Posterior vena cava (tissue), 2 donors: ENCODE measurements at regions of chr16 and their contacts with region 1.

Region 1: GRCh38 chr16:72856797-72857196 is 191.1 kb downstream of the ZFHX3 start:
- DNase-seq: no peak

Region 2: DNA sequence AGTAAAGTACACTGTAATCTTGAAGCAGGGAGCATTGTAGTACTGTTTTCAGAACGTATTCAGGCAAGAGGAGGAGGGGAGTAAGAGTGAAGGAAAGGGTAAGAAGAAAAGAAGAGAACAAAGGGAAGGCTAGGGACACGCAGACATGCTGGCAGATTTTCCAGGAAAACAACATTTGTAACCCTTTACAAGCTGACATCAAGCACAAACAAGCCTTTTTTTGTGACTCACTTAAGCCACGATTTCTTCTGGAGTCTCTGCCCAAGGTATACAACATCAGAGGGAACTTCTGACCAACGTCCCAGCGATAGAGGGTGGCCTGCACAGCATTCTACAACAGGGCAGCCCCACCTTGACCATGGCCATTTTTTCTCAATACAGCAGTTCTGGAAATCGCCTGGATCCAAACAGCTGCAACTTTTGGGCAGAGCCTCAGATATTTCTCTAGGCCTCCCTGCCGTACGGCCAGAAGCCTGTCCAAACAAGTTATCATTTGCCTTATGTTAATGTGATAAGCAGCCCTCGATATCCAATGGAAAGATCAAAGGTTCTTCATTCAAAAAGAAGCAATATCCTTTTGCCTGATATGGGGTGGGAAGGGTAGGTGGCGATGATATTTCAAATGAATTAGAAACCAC is 56.2 kb before region 1 on chr16:
- intact Hi-C with region 1: no loop called
- DNase-seq: no peak

Region 3: GRCh38 chr16:72832621-72833248 is 24.1 kb before region 1 on chr16:
- intact Hi-C with region 1: no loop called
- DNase-seq: peak; percentile 94

Region 4: DNA sequence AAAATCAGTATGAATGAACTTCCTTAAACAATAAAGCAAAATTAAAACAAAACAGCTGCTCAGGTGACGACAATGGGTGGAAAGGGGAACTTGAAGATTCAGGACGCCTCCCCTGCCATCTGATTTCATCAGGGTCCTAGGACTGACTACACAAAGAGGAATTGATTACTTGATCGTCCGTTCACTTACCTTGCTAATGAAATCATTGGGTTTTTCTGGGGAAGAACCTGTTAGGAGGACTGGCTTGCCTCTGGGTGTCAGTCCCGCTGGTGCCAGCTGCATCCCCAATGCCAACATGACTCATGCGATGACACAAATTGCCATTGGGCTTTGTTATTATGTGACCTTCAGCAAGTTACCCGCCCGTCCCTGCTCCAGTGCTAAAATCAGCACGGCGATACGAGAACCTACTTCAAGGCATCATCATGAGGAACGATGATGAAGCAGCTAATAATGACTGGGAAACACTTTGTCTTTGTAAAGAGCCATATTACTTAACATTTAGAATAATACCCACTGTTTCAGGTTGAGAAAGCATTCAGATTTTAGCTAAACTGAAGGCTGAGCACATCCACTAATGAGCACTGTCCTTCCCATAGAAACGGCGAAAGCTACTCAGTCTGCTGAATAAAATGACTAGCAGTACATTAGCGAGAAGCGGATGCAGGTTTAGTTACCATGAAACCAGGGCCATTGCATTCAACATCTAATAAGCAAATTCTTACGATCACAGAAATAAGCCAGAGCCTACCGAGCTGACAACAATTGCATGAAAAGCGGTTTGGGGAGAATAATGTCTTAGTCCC is 51.8 kb after region 1 on chr16:
- intact Hi-C with region 1: loop called in 1 of 2 experiments (anchors 2 kb)
- DNase-seq: peak; percentile 67

Region 5: DNA sequence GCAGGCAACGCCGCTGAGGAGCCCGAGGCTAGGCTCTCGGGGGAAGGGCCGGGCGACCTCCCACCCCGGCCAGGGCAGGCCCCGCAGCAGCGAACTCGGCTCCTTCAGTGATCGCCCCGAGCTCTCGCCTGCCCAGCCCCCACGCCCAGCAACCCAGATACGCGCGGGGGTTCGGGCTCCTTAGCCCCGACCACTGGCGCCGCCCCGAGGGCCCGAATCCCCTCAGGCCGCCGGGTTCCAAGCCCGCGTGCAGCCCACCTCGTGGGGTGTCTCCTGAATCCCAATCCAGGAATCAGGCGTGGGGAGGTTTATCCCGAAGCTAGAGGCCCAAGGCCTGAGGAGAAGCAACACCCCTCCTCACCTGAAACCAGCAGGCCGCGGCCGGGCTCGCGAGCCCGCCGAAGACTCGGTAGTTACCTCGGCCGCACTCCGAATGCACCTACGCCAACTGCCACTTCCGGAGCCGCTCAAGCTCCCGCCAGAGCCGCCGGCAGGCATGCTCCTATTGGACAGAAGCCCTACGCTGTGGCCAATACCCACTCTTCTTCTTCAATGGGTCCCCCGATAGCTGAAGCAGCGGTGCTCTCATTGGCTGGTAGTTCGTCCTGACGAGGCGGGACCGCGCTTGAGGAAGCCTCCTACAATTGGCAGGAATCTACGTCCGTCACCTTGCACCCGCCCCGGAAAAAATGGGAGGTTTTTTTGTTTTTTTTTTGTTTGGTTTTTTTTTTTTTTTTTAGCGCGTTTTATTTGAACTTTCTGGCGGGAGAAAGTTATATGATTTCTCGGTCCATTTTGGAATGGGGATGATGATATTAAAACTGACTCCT is 1809.8 kb after region 1 on chr16 and contains the start of gene RFWD3:
- intact Hi-C with region 1: no loop called
- DNase-seq: peak; percentile 98
- total RNA-seq, gene RFWD3: 12.3 to 13.2 TPM